Pancreas (tissue), 10 donors: ENCODE measurements at regions of chr12 and their contacts with region 1.

Region 1: DNA sequence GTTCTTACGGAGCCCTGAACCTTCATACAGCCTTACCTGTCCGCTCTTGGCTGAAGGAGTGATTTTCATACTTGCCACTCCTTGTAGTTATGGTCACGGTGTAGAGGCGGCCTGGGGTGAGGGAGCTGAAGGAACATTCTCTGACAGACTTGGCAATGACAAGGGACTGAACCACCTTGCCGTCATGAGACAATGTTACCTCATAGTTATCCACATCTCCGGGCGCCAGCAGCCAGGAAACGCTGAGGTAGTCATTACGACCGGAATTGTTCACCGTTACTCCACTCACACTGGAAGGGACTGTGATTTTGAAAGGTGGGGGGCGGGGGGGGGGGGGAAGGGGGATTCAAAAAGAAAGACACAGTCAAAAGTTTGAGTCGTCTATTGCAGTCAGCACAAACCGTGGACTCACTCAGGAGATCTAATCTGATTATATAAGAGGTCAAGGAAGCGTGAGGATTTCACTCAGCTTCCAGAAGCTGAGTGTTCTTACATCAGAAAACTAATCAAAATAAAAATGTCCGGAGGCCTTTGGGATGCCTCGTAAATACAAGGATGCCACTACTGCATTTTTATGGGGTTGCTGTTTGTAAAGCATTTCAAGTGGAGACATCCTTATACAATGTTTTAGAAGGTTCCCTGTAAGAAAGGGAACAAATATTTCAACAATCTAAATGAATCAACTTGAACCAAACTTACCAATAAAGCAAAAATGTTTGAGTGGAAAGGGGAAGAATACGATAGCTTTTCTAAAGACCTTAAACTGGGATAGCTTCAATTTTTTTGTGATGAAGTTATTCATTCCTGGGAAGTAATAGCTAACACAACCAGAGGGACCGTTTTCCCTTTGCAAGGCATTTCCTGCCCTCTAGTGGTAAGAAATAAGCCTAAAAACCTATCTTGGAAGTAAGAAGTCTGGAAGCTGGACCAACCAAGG is 60.6 kb downstream of the PTPRB start:
- DNase-seq: no peak
- ATAC-seq: peak in 3 of 4 donors; percentile 86 to 89 (median 88)
- H3K4me3 ChIP-seq: no peak overlapping the region
- H3K27ac ChIP-seq: no peak overlapping the region
- H3K4me1 ChIP-seq: no peaks in the 10 kb centered on the region
- H3K27me3 ChIP-seq: no peaks in the 10 kb centered on the region
- CTCF ChIP-seq: peak; percentile 35 to 73 (median 52)

Region 2: DNA sequence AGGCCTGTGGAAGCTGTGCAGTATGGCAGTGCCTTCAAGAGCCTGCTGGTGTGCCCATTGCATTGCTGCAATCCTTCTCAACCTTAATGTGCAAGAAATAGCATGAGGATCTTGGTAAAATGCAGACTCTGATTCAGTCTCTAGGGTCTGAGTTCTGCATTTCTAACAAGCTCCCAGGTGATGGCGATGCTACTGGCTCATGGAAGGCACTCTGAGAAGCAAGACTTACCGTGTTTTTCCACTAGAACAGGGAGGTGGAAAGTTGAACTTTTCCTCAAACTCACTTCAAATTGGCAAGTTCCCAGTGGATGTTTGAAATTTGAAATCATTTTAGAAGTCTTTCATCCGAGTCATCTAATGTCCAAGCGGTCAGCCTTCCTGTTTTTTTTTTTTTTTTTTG is 696.0 kb before region 1 on chr12:
- intact Hi-C with region 1: loop called in 1 of 3 experiments (anchors 10 kb)
- DNase-seq: no peak
- ATAC-seq: no peak
- H3K4me3 ChIP-seq: no peak overlapping the region
- H3K27ac ChIP-seq: no peak overlapping the region
- H3K4me1 ChIP-seq: no peaks in the 10 kb centered on the region
- H3K27me3 ChIP-seq: peaks cover 0 to 12% (median 0%) of the 10 kb centered on the region in 4 donors
- CTCF ChIP-seq: no peak

Region 3: DNA sequence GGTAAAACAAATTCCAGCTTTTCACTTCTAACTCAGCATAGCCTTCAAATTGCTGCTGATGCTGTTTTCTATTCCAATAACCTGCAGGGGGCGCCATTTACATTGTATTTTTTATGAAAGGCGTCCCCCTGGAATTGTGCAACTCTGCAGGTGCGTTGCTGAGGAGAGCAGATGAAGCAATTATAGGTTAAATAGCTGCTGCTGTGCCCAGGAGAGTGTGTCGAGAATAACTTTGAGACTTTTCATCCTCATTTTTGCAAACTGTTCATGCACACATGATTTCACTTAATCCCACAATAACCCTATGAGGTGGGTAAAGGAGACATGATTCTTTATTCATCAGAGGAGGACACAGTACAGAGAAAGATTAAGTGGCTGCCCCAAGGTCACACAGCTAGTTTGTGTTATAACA is 675.9 kb before region 1 on chr12:
- intact Hi-C with region 1: loop called in 1 of 3 experiments (anchors 5 kb)
- DNase-seq: peak in 5 of 6 donors; percentile 54 to 79 (median 61)
- ATAC-seq: peak; percentile 68 to 91 (median 82)
- H3K4me3 ChIP-seq: no peak overlapping the region
- H3K27ac ChIP-seq: no peak overlapping the region
- H3K4me1 ChIP-seq: peaks cover 0 to 2% (median 0%) of the 10 kb centered on the region in 3 donors
- H3K27me3 ChIP-seq: no peaks in the 10 kb centered on the region
- CTCF ChIP-seq: peak; percentile 74 to 82 (median 78)